ENCODE measurements at regions of chr5 and their contacts with region 1.

Region 1: GRCh38 chr5:54844905-54845566 is 140.4 kb downstream of the ESM1 start:
- DNase-seq: peak; percentile 8
- H3K4me3 ChIP-seq: no peak overlapping the region
- H3K27ac ChIP-seq: no peak overlapping the region
- H3K4me1 ChIP-seq: peaks cover 6% of the 10 kb centered on the region
- H3K27me3 ChIP-seq: no peaks in the 10 kb centered on the region
- CTCF ChIP-seq: peak; percentile 24 to 43

Region 2: GRCh38 chr5:54567996-54568395 is 277.0 kb before region 1 on chr5:
- CTCF ChIA-PET with region 1: interaction called, 32 read pairs
- dilution Hi-C with region 1: no loop called
- in situ Hi-C with region 1: no loop called
- intact Hi-C with region 1: no loop called
- DNase-seq: no peak
- H3K4me3 ChIP-seq: no peak overlapping the region
- H3K27ac ChIP-seq: no peak overlapping the region
- H3K4me1 ChIP-seq: no peaks in the 10 kb centered on the region
- H3K27me3 ChIP-seq: no peaks in the 10 kb centered on the region
- CTCF ChIP-seq: no peak

Region 3: GRCh38 chr5:54646356-54647101 is 198.5 kb before region 1 on chr5:
- CTCF ChIA-PET with region 1: no interaction called
- dilution Hi-C with region 1: no loop called
- in situ Hi-C with region 1: no loop called
- intact Hi-C with region 1: loop called (anchors 10 kb)
- DNase-seq: peak; percentile 59
- H3K4me3 ChIP-seq: no peak overlapping the region
- H3K27ac ChIP-seq: no peak overlapping the region
- H3K4me1 ChIP-seq: peaks cover 46% of the 10 kb centered on the region
- H3K27me3 ChIP-seq: no peaks in the 10 kb centered on the region
- CTCF ChIP-seq: no peak

Region 4: GRCh38 chr5:54743997-54744788 is 100.8 kb before region 1 on chr5:
- CTCF ChIA-PET with region 1: interaction called, 3 read pairs
- dilution Hi-C with region 1: no loop called
- in situ Hi-C with region 1: no loop called
- intact Hi-C with region 1: loop called (anchors 1 kb)
- DNase-seq: peak; percentile 95
- H3K4me3 ChIP-seq: no peak overlapping the region
- H3K27ac ChIP-seq: peak overlapping the region; percentile 64
- H3K4me1 ChIP-seq: peaks cover 31% of the 10 kb centered on the region
- H3K27me3 ChIP-seq: no peaks in the 10 kb centered on the region
- CTCF ChIP-seq: no peak

Region 5: GRCh38 chr5:54753034-54753433 is 92.0 kb before region 1 on chr5:
- CTCF ChIA-PET with region 1: no interaction called
- dilution Hi-C with region 1: no loop called
- in situ Hi-C with region 1: loop called in 1 of 2 experiments (anchors 10 kb)
- intact Hi-C with region 1: no loop called
- DNase-seq: no peak
- H3K4me3 ChIP-seq: no peak overlapping the region
- H3K27ac ChIP-seq: no peak overlapping the region
- H3K4me1 ChIP-seq: peaks cover 21% of the 10 kb centered on the region
- H3K27me3 ChIP-seq: no peaks in the 10 kb centered on the region
- CTCF ChIP-seq: no peak

Region 6: DNA sequence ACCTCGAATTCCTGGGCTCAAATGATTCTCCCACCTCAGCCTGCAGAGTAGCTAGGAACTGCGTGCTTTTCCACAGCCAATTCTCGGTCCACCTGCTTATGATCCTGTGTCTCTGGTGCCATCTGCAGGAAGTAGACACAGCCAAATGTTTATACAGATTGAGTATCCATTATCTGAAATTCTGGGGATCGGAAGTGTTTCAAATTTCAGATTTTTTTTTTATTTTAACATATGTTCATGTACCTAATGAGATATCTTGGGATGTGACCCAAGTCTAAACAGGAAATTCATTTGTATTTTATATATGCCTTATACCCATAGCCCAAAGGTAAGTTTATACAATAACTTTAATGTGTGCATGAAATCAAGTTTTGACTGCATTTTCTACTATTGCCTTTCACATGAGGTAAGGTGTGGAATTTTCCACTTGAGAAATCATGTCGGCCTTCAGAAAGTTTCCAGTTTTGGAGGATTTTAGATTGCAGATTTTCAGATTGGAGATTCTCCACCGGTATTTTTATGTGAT is 50.8 kb after region 1 on chr5:
- CTCF ChIA-PET with region 1: no interaction called
- dilution Hi-C with region 1: no loop called
- in situ Hi-C with region 1: no loop called
- intact Hi-C with region 1: loop called (anchors 1 kb)
- DNase-seq: peak; percentile 42
- H3K4me3 ChIP-seq: no peak overlapping the region
- H3K27ac ChIP-seq: no peak overlapping the region
- H3K4me1 ChIP-seq: no peaks in the 10 kb centered on the region
- H3K27me3 ChIP-seq: peaks cover 4% of the 10 kb centered on the region
- CTCF ChIP-seq: peak; percentile 48 to 71

Measured in mammary epithelial cell (primary cell).